SK-N-SH (cell line): ENCODE measurements at regions of chr5 and their contacts with region 1.

Region 1: GRCh38 chr5:142151436-142152383 is 43.1 kb downstream of the NDFIP1 start:
- DNase-seq: peak; percentile 61
- H3K4me3 ChIP-seq: no peak overlapping the region; a peak in 1 of 4 replicates
- H3K27ac ChIP-seq: peak overlapping the region in 1 of 2 experiments; percentile 79; a peak in 3 of 4 replicates
- H3K4me1 ChIP-seq: peaks cover 0 to 7% of the 10 kb centered on the region in 2 experiments; a peak in 3 of 4 replicates
- H3K27me3 ChIP-seq: no peaks in the 10 kb centered on the region
- CTCF ChIP-seq: peak; percentile 97
- EP300 ChIP-seq: no peak
- RAD21 ChIP-seq: peak; percentile 97

Region 2: DNA sequence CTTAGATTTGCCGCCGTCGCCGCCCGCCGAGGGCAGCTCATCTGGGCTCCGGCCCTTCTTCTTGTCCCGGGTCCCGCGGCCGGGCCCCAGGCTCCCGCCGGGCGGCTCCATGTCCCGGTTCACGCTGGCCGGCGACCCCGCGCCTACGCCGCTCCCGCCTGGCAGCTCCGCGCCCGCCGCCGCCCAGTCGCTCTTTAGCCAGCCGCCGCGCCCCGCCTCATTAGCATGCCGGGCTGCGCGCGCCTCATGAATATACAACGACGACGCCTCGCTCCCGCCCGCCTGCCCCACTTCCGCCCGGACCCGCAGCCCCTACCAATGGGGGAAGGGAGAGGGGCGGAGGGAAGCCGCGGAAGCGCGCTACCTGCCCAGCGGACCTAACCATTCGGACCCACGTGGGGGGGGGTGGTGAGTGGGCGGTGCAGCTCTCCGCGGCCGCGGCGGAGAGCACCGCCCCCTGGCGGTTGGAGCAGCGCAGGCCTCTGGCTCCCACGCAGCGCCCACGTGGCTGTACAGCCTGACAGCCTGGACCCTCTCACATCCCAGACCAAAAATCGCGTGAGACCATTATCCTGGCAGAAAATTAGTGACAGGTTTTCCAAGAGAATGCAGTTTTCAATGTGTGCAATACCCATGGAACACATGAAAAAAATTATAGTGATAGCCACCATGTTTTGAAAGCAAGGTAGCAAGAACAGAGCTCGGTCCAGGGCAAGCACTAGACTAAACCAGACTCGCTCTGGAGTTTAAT is 532.7 kb before region 1 on chr5 and contains the start of gene DIAPH1:
- CTCF ChIA-PET with region 1: no interaction called
- POLR2A ChIA-PET with region 1: no interaction called
- DNase-seq: peak; percentile 99
- H3K4me3 ChIP-seq: peak within 1 kb of the TSS; percentile 72 to 82
- H3K27ac ChIP-seq: peak within 1 kb of the TSS; percentile 67 to 72
- H3K4me1 ChIP-seq: peaks cover 9 to 12% of the 10 kb centered on the region in 2 experiments; a peak in 2 of 4 replicates
- H3K27me3 ChIP-seq: no peaks in the 10 kb centered on the region
- CTCF ChIP-seq: peak; percentile 95
- EP300 ChIP-seq: peak; percentile 14 to 65; a peak in 2 of 4 replicates
- RAD21 ChIP-seq: peak; percentile 74
- polyA plus RNA-seq, gene DIAPH1: 28.2 and 30.4 TPM in 2 replicates

Region 3: GRCh38 chr5:142079306-142079721 is 72.4 kb before region 1 on chr5:
- CTCF ChIA-PET with region 1: no interaction called
- POLR2A ChIA-PET with region 1: no interaction called
- DNase-seq: peak; percentile 42
- H3K4me3 ChIP-seq: no peak overlapping the region
- H3K27ac ChIP-seq: peak overlapping the region in 1 of 2 experiments; percentile 86; a peak in 2 of 4 replicates
- H3K4me1 ChIP-seq: peaks cover 0 to 12% of the 10 kb centered on the region in 2 experiments; a peak in 2 of 4 replicates
- H3K27me3 ChIP-seq: no peaks in the 10 kb centered on the region
- CTCF ChIP-seq: no peak
- EP300 ChIP-seq: no peak
- RAD21 ChIP-seq: no peak

Region 4: GRCh38 chr5:142167458-142167857 is 15.7 kb after region 1 on chr5:
- CTCF ChIA-PET with region 1: interaction called, 14 read pairs
- POLR2A ChIA-PET with region 1: no interaction called
- DNase-seq: no peak
- H3K4me3 ChIP-seq: no peak overlapping the region
- H3K27ac ChIP-seq: peak overlapping the region in 1 of 2 experiments; percentile 99; a peak in 2 of 4 replicates
- H3K4me1 ChIP-seq: peaks cover 5 to 48% of the 10 kb centered on the region in 2 experiments
- H3K27me3 ChIP-seq: no peaks in the 10 kb centered on the region
- CTCF ChIP-seq: peak; percentile 24; the same call in 1 of the 2 replicates
- EP300 ChIP-seq: no peak
- RAD21 ChIP-seq: peak; percentile 48

Region 5: GRCh38 chr5:142186857-142187594 is 35.3 kb after region 1 on chr5:
- CTCF ChIA-PET with region 1: interaction called, 17 read pairs
- POLR2A ChIA-PET with region 1: no interaction called
- DNase-seq: peak; percentile 67
- H3K4me3 ChIP-seq: no peak overlapping the region
- H3K27ac ChIP-seq: peak overlapping the region in 1 of 2 experiments; percentile 98; a peak in 2 of 4 replicates
- H3K4me1 ChIP-seq: peaks cover 0 to 49% of the 10 kb centered on the region in 2 experiments; a peak in 2 of 4 replicates
- H3K27me3 ChIP-seq: no peaks in the 10 kb centered on the region
- CTCF ChIP-seq: no peak
- EP300 ChIP-seq: peak in 1 of 2 experiments; percentile 12; a peak in 2 of 4 replicates
- RAD21 ChIP-seq: no peak

Region 6: GRCh38 chr5:142324871-142325724 is 173.4 kb after region 1 on chr5 and contains the start of gene SPRY4:
- CTCF ChIA-PET with region 1: interaction called, 47 read pairs
- POLR2A ChIA-PET with region 1: interaction called, 3 read pairs
- DNase-seq: peak; percentile 95
- H3K4me3 ChIP-seq: peak within 1 kb of the TSS; percentile 93 to 95
- H3K27ac ChIP-seq: peak within 1 kb of the TSS; percentile 98
- H3K4me1 ChIP-seq: peaks cover 31 to 50% of the 10 kb centered on the region in 2 experiments
- H3K27me3 ChIP-seq: no peaks in the 10 kb centered on the region
- CTCF ChIP-seq: 0 out of 2 replicates have a peak, but pooled peaks have one; percentile 5
- EP300 ChIP-seq: peak; percentile 36 to 51; a peak in 2 of 4 replicates
- RAD21 ChIP-seq: peak; percentile 39
- polyA plus RNA-seq, gene SPRY4: 12.2 and 18.0 TPM in 2 replicates